CD14-positive monocyte (primary cell): ENCODE measurements at regions of chr10 and their contacts with region 1.

Region 1: GRCh38 chr10:30783939-30784500 is 154.5 kb upstream of the LYZL2 start:
- DNase-seq: peak; percentile 58 to 71 (median 70)
- H3K4me3 ChIP-seq: peak overlapping the region; percentile 52 to 95 (median 91)
- H3K4me3 Mint-ChIP-seq: peak overlapping the region; percentile 79 to 94
- H3K27ac ChIP-seq: no peak overlapping the region
- H3K27ac Mint-ChIP-seq: peak overlapping the region in 4 of 7 donors; percentile 13 to 84 (median 22)
- H3K4me1 ChIP-seq: peaks cover 24 to 31% of the 10 kb centered on the region in 2 donors
- H3K4me1 Mint-ChIP-seq: peaks cover 30% of the 10 kb centered on the region
- H3K27me3 ChIP-seq: no peaks in the 10 kb centered on the region
- H3K27me3 Mint-ChIP-seq: peaks cover 0 to 4% (median 0%) of the 10 kb centered on the region in 3 donors
- CTCF ChIP-seq: peak; percentile 88

Region 2: GRCh38 chr10:30812018-30812851 is 28.2 kb after region 1 on chr10:
- intact Hi-C with region 1: no loop called
- DNase-seq: no peak
- H3K4me3 ChIP-seq: no peak overlapping the region
- H3K4me3 Mint-ChIP-seq: peak overlapping the region; percentile 46 to 57
- H3K27ac ChIP-seq: no peak overlapping the region
- H3K27ac Mint-ChIP-seq: no peak overlapping the region
- H3K4me1 ChIP-seq: peaks cover 0 to 4% of the 10 kb centered on the region in 2 donors
- H3K4me1 Mint-ChIP-seq: peaks cover 26% of the 10 kb centered on the region
- H3K27me3 ChIP-seq: no peaks in the 10 kb centered on the region
- H3K27me3 Mint-ChIP-seq: peaks cover 0 to 4% (median 1%) of the 10 kb centered on the region in 3 donors
- CTCF ChIP-seq: no peak

Region 3: GRCh38 chr10:31083765-31084184 is 299.8 kb after region 1 on chr10:
- intact Hi-C with region 1: loop called in 1 of 2 experiments (anchors 2 kb)
- DNase-seq: peak; percentile 45 to 65 (median 50)
- H3K4me3 ChIP-seq: no peak overlapping the region
- H3K4me3 Mint-ChIP-seq: no peak overlapping the region
- H3K27ac ChIP-seq: no peak overlapping the region
- H3K27ac Mint-ChIP-seq: peak overlapping the region in 1 of 7 donors; percentile 43
- H3K4me1 ChIP-seq: no peaks in the 10 kb centered on the region
- H3K4me1 Mint-ChIP-seq: peaks cover 3% of the 10 kb centered on the region
- H3K27me3 ChIP-seq: no peaks in the 10 kb centered on the region
- H3K27me3 Mint-ChIP-seq: peaks cover 0 to 5% (median 1%) of the 10 kb centered on the region in 3 donors
- CTCF ChIP-seq: peak; percentile 72

Region 4: GRCh38 chr10:31770307-31770902 is 986.4 kb after region 1 on chr10:
- intact Hi-C with region 1: loop called in 1 of 2 experiments (anchors 10 kb)
- DNase-seq: peak; percentile 46 to 60 (median 60)
- H3K4me3 ChIP-seq: no peak overlapping the region
- H3K4me3 Mint-ChIP-seq: no peak overlapping the region
- H3K27ac ChIP-seq: no peak overlapping the region
- H3K27ac Mint-ChIP-seq: no peak overlapping the region
- H3K4me1 ChIP-seq: no peaks in the 10 kb centered on the region
- H3K4me1 Mint-ChIP-seq: no peaks in the 10 kb centered on the region
- H3K27me3 ChIP-seq: no peaks in the 10 kb centered on the region
- H3K27me3 Mint-ChIP-seq: no peaks in the 10 kb centered on the region
- CTCF ChIP-seq: peak; percentile 96

Region 5: DNA sequence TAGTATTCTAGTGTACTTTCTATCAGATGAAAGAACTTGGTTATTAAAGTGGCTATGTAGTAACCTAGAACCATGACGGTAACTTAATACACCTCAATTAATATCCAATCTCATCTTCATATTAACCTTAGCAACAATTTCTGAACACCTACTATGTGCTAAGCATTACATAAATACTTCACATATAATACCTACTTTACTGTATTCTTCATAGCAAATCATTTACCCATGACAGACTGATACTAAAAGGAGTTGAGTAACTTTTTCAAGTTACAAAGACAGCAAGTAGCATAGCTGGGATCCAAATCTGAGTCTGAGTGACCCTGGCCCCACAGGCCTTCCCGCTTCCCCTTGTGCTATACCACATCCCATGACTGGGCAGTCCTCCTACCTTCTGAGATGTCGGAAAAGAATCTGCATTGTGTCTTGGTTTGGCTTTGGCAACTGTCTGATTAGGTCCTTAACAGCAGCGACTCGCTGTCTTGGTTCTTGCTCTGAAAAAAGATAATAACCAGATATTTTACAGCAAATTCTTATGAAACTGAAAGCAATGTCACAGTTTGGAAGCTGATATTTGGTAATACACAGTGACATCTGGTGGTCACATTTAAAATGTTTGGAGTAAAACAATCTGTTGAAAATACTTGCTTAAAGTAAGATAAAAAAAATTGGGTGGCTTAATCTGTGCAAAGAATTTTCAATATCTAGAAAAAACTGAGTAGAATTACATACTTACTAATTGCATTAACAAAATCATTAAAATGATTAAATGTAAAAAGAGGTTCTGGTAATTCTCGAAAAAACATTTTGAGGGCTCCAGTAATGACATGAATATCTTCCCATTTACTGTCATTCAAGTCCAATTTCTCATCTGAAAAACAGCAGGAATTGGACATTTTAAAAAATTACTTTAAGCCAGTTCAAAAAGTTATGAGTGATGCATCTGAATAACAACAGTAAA is 1024.5 kb after region 1 on chr10:
- intact Hi-C with region 1: loop called in 1 of 2 experiments (anchors 2 kb)
- DNase-seq: peak; percentile 30 to 50 (median 42)
- H3K4me3 ChIP-seq: peak overlapping the region; percentile 49 to 91 (median 72)
- H3K4me3 Mint-ChIP-seq: peak overlapping the region; percentile 67 to 90
- H3K27ac ChIP-seq: peak overlapping the region in 1 of 2 donors; percentile 67
- H3K27ac Mint-ChIP-seq: peak overlapping the region in 6 of 7 donors; percentile 61 to 93 (median 82)
- H3K4me1 ChIP-seq: peaks cover 0 to 3% of the 10 kb centered on the region in 2 donors
- H3K4me1 Mint-ChIP-seq: peaks cover 5% of the 10 kb centered on the region
- H3K27me3 ChIP-seq: no peaks in the 10 kb centered on the region
- H3K27me3 Mint-ChIP-seq: peaks cover 0 to 1% (median 0%) of the 10 kb centered on the region in 3 donors
- CTCF ChIP-seq: peak; percentile 77